Naive thymus-derived CD4-positive, alpha-beta T cell (primary cell): ENCODE measurements at regions of chr10 and their contacts with region 1.

Region 1: DNA sequence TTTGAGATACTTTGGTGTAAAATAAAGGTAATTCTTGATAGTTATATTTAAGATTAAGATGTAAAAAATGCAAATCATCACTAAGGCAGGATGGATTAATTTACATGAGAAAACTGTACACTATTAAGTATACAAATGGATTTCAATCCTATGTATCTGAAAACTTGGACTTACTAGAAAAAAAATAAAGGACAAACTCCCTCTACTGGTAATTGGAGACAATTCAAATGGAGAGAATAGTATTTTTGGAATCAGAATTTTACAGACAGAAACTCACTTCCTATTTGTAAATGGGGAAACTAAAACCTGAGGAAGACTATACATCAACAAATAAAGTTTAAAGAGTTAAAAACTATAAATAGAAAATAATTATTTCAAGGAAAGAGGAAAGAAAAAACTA is 62.6 kb downstream of the CUL2 start:
- DNase-seq: no peak
- ATAC-seq: no peak
- H3K4me3 ChIP-seq: no peak overlapping the region
- H3K4me3 Mint-ChIP-seq: no peak overlapping the region
- H3K27ac ChIP-seq: no peak overlapping the region
- H3K27ac Mint-ChIP-seq: peak overlapping the region in 3 of 9 donors; percentile 1 to 51 (median 36)
- H3K4me1 ChIP-seq: no peaks in the 10 kb centered on the region
- H3K4me1 Mint-ChIP-seq: no peaks in the 10 kb centered on the region
- H3K27me3 ChIP-seq: no peaks in the 10 kb centered on the region
- H3K27me3 Mint-ChIP-seq: no peaks in the 10 kb centered on the region

Region 2: DNA sequence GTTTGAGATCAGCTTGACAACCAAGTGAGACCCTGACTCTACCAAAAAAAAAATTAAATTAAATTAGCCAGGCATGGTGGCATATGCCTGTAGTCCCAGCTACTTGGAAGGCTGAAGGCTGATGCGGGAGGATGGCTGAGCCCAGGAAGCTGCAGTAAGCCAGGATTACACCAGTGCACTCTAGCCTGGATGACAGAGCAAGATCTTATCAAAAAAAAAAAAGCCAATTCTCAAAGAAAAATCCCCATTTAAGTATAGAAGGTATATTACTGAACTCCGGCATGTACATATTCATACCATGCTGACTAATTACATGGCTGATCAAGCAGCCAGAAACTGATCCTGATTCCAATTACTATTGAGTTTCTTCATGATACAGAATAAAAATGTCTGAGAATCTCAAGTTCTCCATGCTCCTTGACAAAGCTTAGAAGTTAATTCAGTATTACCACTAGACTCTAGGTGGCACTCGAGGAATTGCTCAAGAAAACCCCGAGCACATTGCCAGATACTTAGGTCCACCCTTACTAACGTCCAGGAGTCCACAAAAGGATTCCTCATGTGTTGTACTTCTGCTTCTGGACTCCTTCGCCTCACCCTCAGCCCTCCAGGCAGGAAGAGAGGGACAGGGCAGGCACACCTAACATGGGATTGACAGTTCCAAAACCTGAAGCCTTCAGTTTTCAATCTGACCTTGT is 361.4 kb before region 1 on chr10:
- CTCF ChIA-PET with region 1: no interaction called
- POLR2A ChIA-PET with region 1: no interaction called
- intact Hi-C with region 1: loop called in 1 of 2 experiments (anchors 5 kb)
- DNase-seq: peak in 1 of 9 donors; percentile 5
- ATAC-seq: peak; percentile 29
- H3K4me3 ChIP-seq: no peak overlapping the region
- H3K4me3 Mint-ChIP-seq: no peak overlapping the region
- H3K27ac ChIP-seq: no peak overlapping the region
- H3K27ac Mint-ChIP-seq: no peak overlapping the region
- H3K4me1 ChIP-seq: no peaks in the 10 kb centered on the region
- H3K4me1 Mint-ChIP-seq: no peaks in the 10 kb centered on the region
- H3K27me3 ChIP-seq: no peaks in the 10 kb centered on the region
- H3K27me3 Mint-ChIP-seq: peaks cover 2 to 14% (median 9%) of the 10 kb centered on the region in 5 donors

Region 3: GRCh38 chr10:35011771-35012191 is 15.8 kb before region 1 on chr10:
- CTCF ChIA-PET with region 1: interaction called, 3 read pairs
- POLR2A ChIA-PET with region 1: no interaction called
- intact Hi-C with region 1: loop called in 1 of 2 experiments (anchors 2 kb)
- DNase-seq: peak in 7 of 9 donors; percentile 31 to 67 (median 59)
- ATAC-seq: peak; percentile 71
- H3K4me3 ChIP-seq: no peak overlapping the region
- H3K4me3 Mint-ChIP-seq: peak overlapping the region in 9 of 10 donors; percentile 46 to 83 (median 69)
- H3K27ac ChIP-seq: peak overlapping the region; percentile 61
- H3K27ac Mint-ChIP-seq: peak overlapping the region; percentile 39 to 98 (median 94)
- H3K4me1 ChIP-seq: peaks cover 0 to 10% of the 10 kb centered on the region in 2 donors
- H3K4me1 Mint-ChIP-seq: peaks cover 0 to 28% (median 17%) of the 10 kb centered on the region in 7 donors
- H3K27me3 ChIP-seq: no peaks in the 10 kb centered on the region
- H3K27me3 Mint-ChIP-seq: no peaks in the 10 kb centered on the region

Region 4: DNA sequence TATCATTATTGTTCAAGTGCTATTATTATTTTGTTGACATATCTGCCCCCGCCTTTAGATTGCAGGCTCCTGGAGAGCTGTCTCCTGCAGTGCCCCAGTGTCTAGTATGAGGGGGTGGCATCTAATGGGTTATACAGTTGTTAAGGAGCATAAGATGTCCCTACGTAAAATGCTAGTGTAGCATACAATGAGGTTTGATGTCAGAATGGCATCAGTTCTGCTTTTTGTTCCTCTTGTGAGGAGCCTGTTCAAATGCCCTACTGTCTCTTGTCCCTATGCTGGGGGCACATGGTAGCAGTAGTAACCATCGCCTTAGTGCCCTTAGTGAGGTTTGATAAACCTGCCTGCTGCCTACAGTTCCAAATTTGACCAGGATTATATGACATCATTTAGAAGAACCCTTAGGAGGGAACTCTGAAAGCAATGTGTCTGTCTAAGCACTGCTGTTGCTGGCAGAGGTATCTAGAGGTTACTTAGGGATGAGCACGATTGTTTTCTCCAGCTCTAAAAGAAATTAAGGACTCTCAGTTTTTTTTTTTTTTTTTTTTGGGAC is 108.8 kb after region 1 on chr10:
- CTCF ChIA-PET with region 1: no interaction called
- POLR2A ChIA-PET with region 1: no interaction called
- intact Hi-C with region 1: no loop called
- DNase-seq: no peak
- ATAC-seq: peak; percentile 59
- H3K4me3 ChIP-seq: no peak overlapping the region
- H3K4me3 Mint-ChIP-seq: peak overlapping the region in 6 of 10 donors; percentile 0 to 65 (median 46)
- H3K27ac ChIP-seq: peak overlapping the region; percentile 14
- H3K27ac Mint-ChIP-seq: peak overlapping the region in 8 of 9 donors; percentile 3 to 87 (median 72)
- H3K4me1 ChIP-seq: peaks cover 17 to 23% of the 10 kb centered on the region in 2 donors
- H3K4me1 Mint-ChIP-seq: peaks cover 23 to 39% (median 35%) of the 10 kb centered on the region in 7 donors
- H3K27me3 ChIP-seq: no peaks in the 10 kb centered on the region
- H3K27me3 Mint-ChIP-seq: no peaks in the 10 kb centered on the region